ENCODE measurements at regions of chr6 and their contacts with region 1.

Region 1: GRCh38 chr6:34055223-34055933 is 90.5 kb downstream of the GRM4 start:
- DNase-seq: peak; percentile 64 to 68
- ATAC-seq: peak; percentile 82 to 96
- H3K4me3 ChIP-seq: no peak overlapping the region
- H3K27ac ChIP-seq: no peak overlapping the region
- H3K4me1 ChIP-seq: no peaks in the 10 kb centered on the region
- CTCF ChIP-seq: peak; percentile 71
- EP300 ChIP-seq: no peak
- POLR2A ChIP-seq: no peak
- RAD21 ChIP-seq: peak; percentile 49 to 58

Region 2: GRCh38 chr6:33904050-33904746 is 151.2 kb before region 1 on chr6:
- CTCF ChIA-PET with region 1: no interaction called
- POLR2A ChIA-PET with region 1: no interaction called
- DNase-seq: no peak
- ATAC-seq: no peak
- H3K4me3 ChIP-seq: no peak overlapping the region
- H3K27ac ChIP-seq: no peak overlapping the region
- H3K4me1 ChIP-seq: 0 out of 3 replicates have a peak, but pooled peaks cover 3% of the 10 kb centered on the region
- CTCF ChIP-seq: no peak
- EP300 ChIP-seq: no peak
- POLR2A ChIP-seq: no peak
- RAD21 ChIP-seq: no peak

Region 3: DNA sequence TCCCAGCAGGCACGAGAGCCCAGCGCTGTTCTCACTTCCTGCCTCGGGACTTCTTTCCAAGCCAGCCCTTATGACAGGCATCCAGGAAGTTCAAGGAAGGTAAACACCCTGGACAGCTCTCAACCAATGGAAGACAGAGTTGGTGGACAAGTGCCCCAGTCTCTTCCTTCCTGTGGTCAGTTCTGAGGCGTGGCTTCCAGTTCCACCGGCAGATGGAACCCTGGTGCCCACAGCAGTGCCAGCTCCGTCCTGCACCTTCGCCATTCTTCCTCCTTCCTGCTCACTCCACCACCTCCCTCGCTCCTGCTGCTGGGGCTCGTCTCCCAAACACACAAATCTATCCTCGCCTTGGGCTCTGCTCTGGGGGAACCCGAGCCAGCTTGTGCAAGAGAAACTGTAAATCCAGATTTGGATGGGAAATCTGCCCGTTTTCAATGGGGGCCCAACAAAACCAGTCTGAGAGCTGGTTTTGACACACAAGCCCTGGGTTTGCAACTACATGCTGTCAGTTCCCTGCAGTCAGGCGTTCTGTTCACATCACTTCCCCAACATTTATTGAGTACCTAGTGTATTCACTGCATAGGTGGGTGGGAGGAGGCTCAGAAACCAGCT is 72.2 kb before region 1 on chr6:
- CTCF ChIA-PET with region 1: no interaction called
- POLR2A ChIA-PET with region 1: no interaction called
- DNase-seq: peak; percentile 35 to 58
- ATAC-seq: peak; percentile 50 to 93; a peak in 4 of 6 replicates
- H3K4me3 ChIP-seq: no peak overlapping the region
- H3K27ac ChIP-seq: no peak overlapping the region
- H3K4me1 ChIP-seq: no peaks in the 10 kb centered on the region
- CTCF ChIP-seq: no peak
- EP300 ChIP-seq: no peak
- POLR2A ChIP-seq: no peak
- RAD21 ChIP-seq: no peak

Region 4: DNA sequence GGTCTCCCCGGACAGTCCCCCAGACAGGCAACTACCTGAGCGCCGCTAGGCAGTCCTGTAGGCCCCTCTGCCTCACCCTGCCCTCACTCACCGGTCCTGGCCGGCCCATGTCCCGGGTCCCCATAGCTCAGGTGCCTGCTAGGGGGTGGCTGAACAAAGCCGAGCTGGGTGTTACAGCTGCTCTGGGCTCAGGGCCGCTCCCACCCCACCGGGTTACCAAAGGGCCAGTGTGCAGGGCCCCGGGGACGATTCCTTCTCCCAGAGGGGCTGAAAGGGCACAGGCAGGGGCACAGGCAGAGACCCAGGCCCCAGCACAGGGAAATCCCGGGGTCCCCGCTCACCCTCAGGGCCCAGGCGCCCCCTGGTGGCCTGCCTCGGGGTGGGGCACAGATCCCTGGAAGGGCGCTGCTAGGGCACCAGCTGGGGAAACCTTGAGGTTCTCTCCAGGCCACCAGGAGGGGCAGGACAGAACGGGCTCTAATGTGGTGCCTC is 27.9 kb before region 1 on chr6:
- CTCF ChIA-PET with region 1: interaction called, 12 read pairs
- POLR2A ChIA-PET with region 1: no interaction called
- DNase-seq: peak; percentile 24 to 68
- ATAC-seq: peak; percentile 84 to 94
- H3K4me3 ChIP-seq: no peak overlapping the region
- H3K27ac ChIP-seq: peak overlapping the region in 1 of 2 experiments; percentile 60; a peak in 2 of 6 replicates
- H3K4me1 ChIP-seq: no peaks in the 10 kb centered on the region
- CTCF ChIP-seq: peak; percentile 63
- EP300 ChIP-seq: no peak
- POLR2A ChIP-seq: no peak
- RAD21 ChIP-seq: peak; percentile 77 to 87

Region 5: DNA sequence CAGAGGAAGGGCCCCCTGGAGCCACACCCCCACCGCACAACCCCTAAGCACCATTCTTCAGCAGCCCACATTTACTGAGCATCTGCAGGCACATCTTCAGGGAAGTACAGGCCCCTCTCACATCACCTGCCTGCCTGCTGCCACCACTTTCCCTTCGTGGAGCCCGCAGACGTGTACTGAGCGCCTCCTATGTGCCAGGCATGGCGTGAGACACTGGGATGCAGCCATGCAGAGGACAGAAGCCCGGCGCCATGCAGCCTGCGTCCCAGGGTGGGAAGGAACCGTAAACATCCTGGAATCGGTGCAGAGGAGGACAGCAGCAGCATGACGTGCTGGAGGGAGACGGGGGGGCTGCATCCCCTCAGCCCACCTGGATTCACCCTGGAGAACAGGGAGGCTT is 12.4 kb after region 1 on chr6:
- CTCF ChIA-PET with region 1: interaction called, 16 read pairs
- POLR2A ChIA-PET with region 1: no interaction called
- DNase-seq: peak; percentile 13 to 37
- ATAC-seq: peak; percentile 28 to 77; a peak in 3 of 6 replicates
- H3K4me3 ChIP-seq: no peak overlapping the region
- H3K27ac ChIP-seq: no peak overlapping the region
- H3K4me1 ChIP-seq: no peaks in the 10 kb centered on the region
- CTCF ChIP-seq: 0 out of 3 replicates have a peak, but pooled peaks have one; percentile 11
- EP300 ChIP-seq: no peak
- POLR2A ChIP-seq: no peak
- RAD21 ChIP-seq: peak in 1 of 2 experiments; percentile 50; a peak in 3 of 5 replicates

Region 6: DNA sequence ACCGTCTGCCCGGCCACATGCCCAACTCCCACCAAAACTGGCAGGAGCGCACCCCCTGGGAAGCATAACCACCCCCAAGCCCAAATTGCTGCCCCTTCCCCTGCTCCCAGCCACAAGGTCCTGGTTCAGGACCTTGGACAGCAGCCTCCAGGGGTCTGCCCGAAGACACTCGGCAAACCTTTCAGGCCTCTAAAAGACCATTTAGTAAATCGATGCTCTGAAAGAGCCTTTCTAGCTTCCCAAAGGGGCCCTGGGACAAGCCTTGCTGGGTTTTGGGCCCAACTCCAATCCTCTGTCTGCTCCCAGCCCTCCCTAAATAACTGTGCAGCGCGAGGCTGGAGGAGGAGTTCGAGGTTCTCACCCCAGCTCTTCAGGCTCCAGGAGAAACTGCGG is 60.0 kb after region 1 on chr6:
- CTCF ChIA-PET with region 1: no interaction called
- POLR2A ChIA-PET with region 1: no interaction called
- DNase-seq: no peak
- ATAC-seq: no peak
- H3K4me3 ChIP-seq: no peak overlapping the region
- H3K27ac ChIP-seq: no peak overlapping the region
- H3K4me1 ChIP-seq: no peaks in the 10 kb centered on the region
- CTCF ChIP-seq: no peak
- EP300 ChIP-seq: no peak
- POLR2A ChIP-seq: no peak
- RAD21 ChIP-seq: no peak

Region 7: DNA sequence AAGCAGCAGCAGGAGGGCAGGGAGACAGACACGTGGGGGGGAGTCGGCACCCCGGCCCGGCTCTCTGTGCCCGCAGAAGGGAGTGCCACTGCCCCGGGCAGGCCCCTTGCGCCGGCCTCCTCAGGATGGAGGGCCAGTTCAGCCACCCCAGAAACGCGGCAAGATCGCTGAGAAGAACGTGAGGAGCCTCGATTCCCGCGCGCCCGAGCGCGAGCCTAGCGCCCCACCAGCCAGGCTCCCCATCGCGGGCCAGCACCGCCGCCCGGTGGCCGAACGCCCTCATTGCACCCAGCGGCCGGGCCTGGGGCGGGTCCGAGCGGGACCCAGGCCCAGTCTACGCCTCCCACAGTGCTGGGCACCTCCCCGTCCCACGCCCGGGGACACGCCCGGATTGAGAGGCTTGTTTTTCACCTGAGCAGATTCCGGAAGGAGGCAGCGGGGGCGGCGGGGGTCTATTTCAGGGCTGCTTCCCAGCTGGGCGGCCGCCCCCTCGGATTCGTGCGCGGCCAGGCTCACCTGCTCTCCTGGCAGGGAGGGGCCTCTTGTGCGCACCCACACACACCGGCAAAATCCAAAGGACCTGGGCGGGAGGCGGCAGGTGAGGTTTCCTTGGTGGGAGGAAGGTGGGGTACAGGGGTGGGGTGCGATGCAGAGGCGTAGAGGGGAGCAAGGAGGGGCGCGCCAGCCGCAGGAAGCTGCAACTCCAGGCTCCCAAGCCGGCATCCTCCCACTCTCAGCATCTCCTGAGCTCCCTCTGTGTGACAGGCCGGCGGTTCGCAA is 99.5 kb after region 1 on chr6:
- CTCF ChIA-PET with region 1: interaction called, 65 read pairs
- POLR2A ChIA-PET with region 1: no interaction called
- DNase-seq: peak; percentile 22 to 62
- ATAC-seq: peak; percentile 57 to 91
- H3K4me3 ChIP-seq: 0 out of 3 replicates have a peak overlapping the region, but pooled peaks have one; percentile 30
- H3K27ac ChIP-seq: peak overlapping the region; percentile 57 to 76; a peak in 3 of 6 replicates
- H3K4me1 ChIP-seq: no peaks in the 10 kb centered on the region
- CTCF ChIP-seq: peak; percentile 83
- EP300 ChIP-seq: no peak
- POLR2A ChIP-seq: no peak
- RAD21 ChIP-seq: peak; percentile 86 to 95